Right cardiac atrium (tissue), 5 donors: ENCODE measurements at regions of chr20 and their contacts with region 1.

Region 1: GRCh38 chr20:19407761-19408160 is 195.3 kb downstream of the SLC24A3 start:
- DNase-seq: no peak
- ATAC-seq: no peak
- H3K4me3 ChIP-seq: no peak overlapping the region
- H3K27ac ChIP-seq: no peak overlapping the region
- H3K4me1 ChIP-seq: no peaks in the 10 kb centered on the region
- H3K27me3 ChIP-seq: no peaks in the 10 kb centered on the region

Region 2: DNA sequence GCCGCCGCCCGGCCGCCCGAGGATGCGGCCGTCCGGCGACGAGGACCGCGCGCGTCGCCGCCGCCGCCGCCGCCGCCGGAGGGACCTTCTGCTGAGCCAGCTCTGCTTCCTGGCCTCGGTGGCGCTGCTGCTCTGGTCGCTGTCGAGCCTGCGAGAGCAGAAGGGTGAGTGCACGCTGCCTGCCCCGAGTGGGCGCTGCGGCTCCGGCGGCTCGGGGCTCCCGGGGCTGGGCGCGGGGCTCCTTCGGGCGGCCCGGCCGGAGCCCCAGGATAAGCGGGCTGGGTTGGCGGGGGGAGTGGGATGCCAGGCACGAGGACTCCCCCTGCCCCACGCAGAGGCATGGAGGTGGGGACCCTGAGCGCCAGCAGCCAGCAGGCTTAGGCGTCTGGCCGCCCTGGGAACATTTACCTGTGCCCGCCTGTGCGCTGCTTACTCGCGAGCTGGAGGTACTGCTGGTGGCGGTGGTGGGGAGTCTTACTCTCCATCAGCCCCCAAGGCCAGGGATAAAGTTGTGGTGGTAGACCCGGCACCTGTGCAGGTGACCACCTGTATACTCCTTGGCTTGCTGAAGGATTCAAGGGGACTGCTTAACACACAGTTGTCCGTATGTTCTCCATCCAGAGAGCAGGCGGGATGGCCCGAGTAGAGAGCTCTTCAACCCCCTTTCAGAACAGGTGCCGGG is 194.8 kb before region 1 on chr20:
- intact Hi-C with region 1: loop called in 1 of 4 experiments (anchors 10 kb)
- DNase-seq: peak; percentile 78 to 90 (median 89)
- ATAC-seq: peak; percentile 85 to 87
- H3K4me3 ChIP-seq: peak overlapping the region; percentile 58
- H3K27ac ChIP-seq: no peak overlapping the region
- H3K4me1 ChIP-seq: no peaks in the 10 kb centered on the region
- H3K27me3 ChIP-seq: peaks cover 3% of the 10 kb centered on the region

Region 3: GRCh38 chr20:19265632-19266373 is 142.0 kb before region 1 on chr20:
- intact Hi-C with region 1: no loop called
- DNase-seq: no peak
- ATAC-seq: no peak
- H3K4me3 ChIP-seq: no peak overlapping the region
- H3K27ac ChIP-seq: no peak overlapping the region
- H3K4me1 ChIP-seq: no peaks in the 10 kb centered on the region
- H3K27me3 ChIP-seq: no peaks in the 10 kb centered on the region